H1 (cell line): ENCODE measurements at regions of chr12 and their contacts with region 1.

Region 1: DNA sequence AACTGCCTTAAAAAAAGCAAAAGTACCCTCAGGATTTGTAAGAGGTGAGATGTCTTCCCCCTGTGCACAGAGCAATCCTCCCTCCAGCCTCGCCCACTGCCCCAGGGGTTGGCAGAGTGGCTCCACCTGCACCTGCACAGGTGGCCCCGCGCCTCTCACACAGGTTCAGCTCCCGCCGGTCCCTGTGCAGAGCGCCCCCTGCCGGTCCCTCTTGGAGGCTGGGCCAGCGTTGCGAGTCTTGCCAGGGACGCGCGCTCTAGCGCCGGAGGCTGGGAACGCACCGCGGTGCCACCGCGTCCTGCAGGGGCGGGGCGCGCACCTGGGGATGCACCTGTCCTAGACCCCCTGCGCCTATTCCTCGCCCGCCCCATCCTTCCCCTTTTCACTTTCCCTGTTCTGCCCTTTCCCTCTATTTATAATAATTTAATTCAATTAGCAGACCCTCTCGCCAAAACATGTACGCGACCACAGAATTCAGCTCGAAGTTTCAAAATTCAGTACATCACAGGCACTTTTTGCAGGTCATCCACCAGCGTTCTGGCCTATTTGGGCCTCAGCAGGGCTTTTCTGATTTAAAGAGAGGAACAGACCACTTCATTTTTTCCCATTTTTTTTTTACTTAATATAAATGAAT is 618.6 kb downstream of the AACS start:
- DNase-seq: peak; percentile 57 to 99
- H3K4me3 ChIP-seq: no peak overlapping the region
- H3K27ac ChIP-seq: no peak overlapping the region
- H3K4me1 ChIP-seq: no peaks in the 10 kb centered on the region; a peak in 1 of 7 replicates
- H3K27me3 ChIP-seq: peaks cover 0 to 3% (median 0%) of the 10 kb centered on the region in 4 experiments; a peak in 2 of 7 replicates
- CTCF ChIP-seq: peak; percentile 97 to 100 (median 98)
- EP300 ChIP-seq: no peak; a peak in 1 of 3 replicates
- POLR2A ChIP-seq: no peak
- RAD21 ChIP-seq: peak; percentile 84 to 89

Region 2: GRCh38 chr12:125533434-125534029 is 150.3 kb before region 1 on chr12:
- CTCF ChIA-PET with region 1: interaction called, 18 read pairs
- POLR2A ChIA-PET with region 1: no interaction called
- DNase-seq: peak; percentile 50 to 90
- H3K4me3 ChIP-seq: peak overlapping the region in 1 of 4 experiments; percentile 24; a peak in 1 of 8 replicates
- H3K27ac ChIP-seq: no peak overlapping the region
- H3K4me1 ChIP-seq: peaks cover 0 to 2% (median 1%) of the 10 kb centered on the region in 4 experiments; a peak in 2 of 7 replicates
- H3K27me3 ChIP-seq: no peaks in the 10 kb centered on the region
- CTCF ChIP-seq: peak; percentile 70 to 78 (median 76)
- EP300 ChIP-seq: no peak
- POLR2A ChIP-seq: no peak
- RAD21 ChIP-seq: peak; percentile 83 to 85

Region 3: GRCh38 chr12:125538401-125539199 is 145.3 kb before region 1 on chr12:
- CTCF ChIA-PET with region 1: interaction called, 18 read pairs
- POLR2A ChIA-PET with region 1: no interaction called
- DNase-seq: no peak
- H3K4me3 ChIP-seq: no peak overlapping the region
- H3K27ac ChIP-seq: no peak overlapping the region
- H3K4me1 ChIP-seq: peaks cover 0 to 2% (median 1%) of the 10 kb centered on the region in 4 experiments; a peak in 2 of 7 replicates
- H3K27me3 ChIP-seq: no peaks in the 10 kb centered on the region
- CTCF ChIP-seq: no peak
- EP300 ChIP-seq: no peak
- POLR2A ChIP-seq: no peak
- RAD21 ChIP-seq: no peak

Region 4: GRCh38 chr12:125650587-125650986 is 33.3 kb before region 1 on chr12:
- CTCF ChIA-PET with region 1: interaction called, 15 read pairs
- POLR2A ChIA-PET with region 1: no interaction called
- DNase-seq: no peak
- H3K4me3 ChIP-seq: no peak overlapping the region
- H3K27ac ChIP-seq: no peak overlapping the region
- H3K4me1 ChIP-seq: no peaks in the 10 kb centered on the region
- H3K27me3 ChIP-seq: no peaks in the 10 kb centered on the region
- CTCF ChIP-seq: no peak
- EP300 ChIP-seq: no peak
- POLR2A ChIP-seq: no peak
- RAD21 ChIP-seq: no peak

Region 5: DNA sequence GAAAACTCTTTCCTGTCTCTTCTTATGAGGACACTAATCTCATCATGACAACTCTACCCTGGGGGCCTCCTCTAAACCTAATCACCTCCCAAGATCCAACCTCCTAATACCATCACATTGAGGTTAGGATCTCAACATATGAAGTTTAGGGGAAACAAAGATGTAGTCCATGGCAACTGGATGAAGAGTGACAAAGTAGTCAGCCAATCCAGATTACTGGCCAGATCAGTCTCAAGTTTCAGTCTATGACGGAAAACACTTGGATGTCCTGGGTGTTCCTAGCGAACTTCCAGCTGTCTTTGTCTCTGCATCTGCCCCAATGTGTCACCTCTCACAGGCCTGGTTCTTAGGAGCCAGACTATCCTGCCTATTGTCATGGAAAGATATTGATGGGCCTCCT is 12.2 kb after region 1 on chr12:
- CTCF ChIA-PET with region 1: interaction called, 22 read pairs
- POLR2A ChIA-PET with region 1: no interaction called
- DNase-seq: no peak
- H3K4me3 ChIP-seq: no peak overlapping the region
- H3K27ac ChIP-seq: no peak overlapping the region
- H3K4me1 ChIP-seq: peaks cover 0 to 3% (median 0%) of the 10 kb centered on the region in 4 experiments; a peak in 2 of 7 replicates
- H3K27me3 ChIP-seq: no peaks in the 10 kb centered on the region
- CTCF ChIP-seq: no peak
- EP300 ChIP-seq: no peak
- POLR2A ChIP-seq: no peak
- RAD21 ChIP-seq: no peak

Region 6: GRCh38 chr12:125734142-125734541 is 50.3 kb after region 1 on chr12:
- CTCF ChIA-PET with region 1: no interaction called
- POLR2A ChIA-PET with region 1: no interaction called
- DNase-seq: no peak
- H3K4me3 ChIP-seq: no peak overlapping the region
- H3K27ac ChIP-seq: no peak overlapping the region
- H3K4me1 ChIP-seq: no peaks in the 10 kb centered on the region
- H3K27me3 ChIP-seq: no peaks in the 10 kb centered on the region
- CTCF ChIP-seq: peak in 2 of 3 experiments; percentile 11 to 40; a peak in 2 of 4 replicates
- EP300 ChIP-seq: no peak
- POLR2A ChIP-seq: no peak
- RAD21 ChIP-seq: peak; percentile 48 to 57